ENCODE measurements at regions of chr4 and their contacts with region 1.

Region 1: DNA sequence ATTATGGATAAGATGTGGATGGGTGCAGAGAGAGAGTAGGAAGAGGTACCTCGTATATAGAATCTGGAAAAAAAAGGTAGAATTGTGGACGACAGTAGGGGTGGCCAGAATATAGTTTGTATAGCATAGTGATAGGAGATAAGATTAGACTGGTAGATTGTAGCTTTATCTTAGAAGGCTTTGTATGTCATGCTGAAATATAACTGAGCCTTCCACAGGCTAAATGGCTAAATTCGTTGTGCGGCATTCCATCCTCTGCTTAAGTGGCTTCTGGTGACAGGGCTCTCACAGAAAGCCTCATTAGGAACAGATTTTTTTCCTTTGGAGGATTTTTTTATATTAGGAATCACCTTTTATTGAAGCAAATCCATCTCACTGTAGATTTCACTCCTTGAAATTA is 142.3 kb upstream of the BMPR1B start:
- DNase-seq: no peak
- H3K4me3 ChIP-seq: no peak overlapping the region
- H3K27ac ChIP-seq: peak overlapping the region in 1 of 2 donors; percentile 42
- H3K4me1 ChIP-seq: peaks cover 0 to 11% of the 10 kb centered on the region in 2 donors
- H3K27me3 ChIP-seq: no peaks in the 10 kb centered on the region
- CTCF ChIP-seq: no peak

Region 2: GRCh38 chr4:94852332-94853015 is 237.0 kb after region 1 on chr4:
- intact Hi-C with region 1: no loop called
- DNase-seq: no peak
- H3K4me3 ChIP-seq: no peak overlapping the region
- H3K27ac ChIP-seq: no peak overlapping the region
- H3K4me1 ChIP-seq: no peaks in the 10 kb centered on the region
- H3K27me3 ChIP-seq: no peaks in the 10 kb centered on the region
- CTCF ChIP-seq: no peak

Region 3: DNA sequence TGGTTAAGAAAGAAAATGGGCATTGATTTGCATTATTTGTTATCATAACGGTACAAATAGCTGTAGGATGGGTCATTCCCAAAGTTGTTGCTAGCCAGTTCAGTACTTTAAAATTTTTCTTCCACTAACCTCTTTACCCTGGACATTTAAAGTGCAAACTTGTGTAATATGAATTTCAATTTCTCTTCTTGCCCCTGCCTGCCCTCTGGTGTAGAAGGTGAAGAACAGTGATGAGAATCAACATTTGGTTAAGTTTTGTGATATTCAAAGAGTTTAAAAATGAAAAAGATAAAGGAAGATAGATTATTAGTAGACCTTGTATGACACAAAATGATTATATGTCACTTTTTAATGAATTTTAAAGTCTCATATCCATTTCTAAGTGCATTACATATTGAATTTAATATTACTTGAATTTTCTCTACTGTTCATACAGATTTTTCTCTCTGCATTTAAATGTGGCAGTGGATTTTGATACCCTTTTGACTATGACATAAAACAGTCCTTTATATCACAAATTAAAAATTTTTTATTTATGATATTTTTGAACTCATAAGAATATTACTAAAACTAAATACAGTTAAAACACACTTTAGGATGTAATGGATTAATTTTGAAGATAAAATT is 480.0 kb after region 1 on chr4:
- intact Hi-C with region 1: loop called (anchors 5 kb)
- DNase-seq: no peak
- H3K4me3 ChIP-seq: no peak overlapping the region
- H3K27ac ChIP-seq: no peak overlapping the region
- H3K4me1 ChIP-seq: peaks cover 0 to 4% of the 10 kb centered on the region in 2 donors
- H3K27me3 ChIP-seq: no peaks in the 10 kb centered on the region
- CTCF ChIP-seq: peak; percentile 34 to 70 (median 69)